Colonic mucosa (tissue), 4 donors: ENCODE measurements at regions of chr1 and their contacts with region 1.

Region 1: GRCh38 chr1:205791568-205792180 is 16.4 kb upstream of the RAB29 start:
- DNase-seq: peak; percentile 71
- H3K4me3 ChIP-seq: no peak overlapping the region
- H3K27ac ChIP-seq: no peak overlapping the region
- H3K4me1 ChIP-seq: no peaks in the 10 kb centered on the region
- H3K27me3 ChIP-seq: no peaks in the 10 kb centered on the region
- CTCF ChIP-seq: peak; percentile 60

Region 2: DNA sequence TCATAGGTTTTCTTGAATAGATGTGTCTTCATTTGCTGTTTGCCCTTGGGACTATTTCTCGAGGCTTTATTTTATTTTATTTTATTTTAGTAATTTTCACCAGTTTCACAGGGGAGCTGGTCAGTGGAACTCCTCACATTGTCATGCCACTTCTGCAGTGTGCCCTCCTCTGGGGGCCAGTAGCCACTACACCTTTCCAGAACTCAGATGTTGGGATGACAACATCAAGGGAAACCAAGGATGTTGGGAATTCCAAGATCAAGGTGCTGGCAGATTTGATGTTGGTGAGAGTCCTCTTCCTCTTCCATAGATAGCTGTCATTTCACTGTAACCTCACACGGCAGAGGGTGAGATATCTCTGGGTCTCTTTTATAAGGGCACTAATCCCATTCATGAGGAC is 116.1 kb after region 1 on chr1:
- intact Hi-C with region 1: loop called (anchors 5 kb)
- DNase-seq: no peak
- H3K4me3 ChIP-seq: no peak overlapping the region
- H3K27ac ChIP-seq: no peak overlapping the region
- H3K4me1 ChIP-seq: no peaks in the 10 kb centered on the region
- H3K27me3 ChIP-seq: no peaks in the 10 kb centered on the region
- CTCF ChIP-seq: peak; percentile 54